ENCODE measurements at regions of chr18 and their contacts with region 1.

Region 1: DNA sequence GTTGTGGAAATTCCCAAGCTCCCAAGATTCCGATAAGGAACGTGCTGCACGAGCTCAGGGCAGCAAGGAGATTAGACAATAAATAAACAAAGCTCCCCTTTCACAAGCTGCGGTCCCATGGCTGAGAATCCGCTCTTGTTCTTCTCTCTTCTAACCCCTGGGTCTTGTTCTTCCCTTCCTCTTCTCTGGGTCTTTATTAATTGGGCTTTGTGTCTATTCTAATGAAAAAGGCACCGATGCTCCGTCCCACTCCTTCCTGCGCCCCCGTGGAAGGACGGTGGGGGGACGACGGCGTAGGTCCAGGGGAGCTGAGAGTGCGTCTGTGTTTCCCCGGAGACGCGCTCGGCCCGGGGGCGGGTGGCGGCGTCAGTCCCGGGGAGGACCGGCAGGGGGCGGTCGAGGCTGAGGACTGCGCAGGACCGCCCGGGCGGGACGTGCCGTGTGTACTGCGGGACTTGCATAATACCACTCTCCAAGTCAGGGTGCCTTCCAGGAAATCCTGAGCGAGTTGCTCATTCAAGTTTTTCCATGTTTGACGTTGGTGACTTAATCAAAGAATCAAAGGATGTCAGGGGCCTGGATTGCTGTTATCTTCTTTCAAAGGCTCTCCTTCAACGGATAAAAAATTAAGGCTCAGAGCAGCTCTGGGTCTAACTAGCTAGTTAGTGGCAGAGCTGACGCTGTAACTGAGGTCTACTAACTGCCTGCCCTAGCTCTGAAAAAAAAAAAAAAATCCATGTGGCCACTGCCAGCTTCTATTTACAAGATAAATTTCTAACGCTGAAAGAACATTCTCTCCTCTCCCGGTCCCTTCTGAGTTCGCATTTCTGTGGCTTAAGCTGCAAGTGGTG is 321.4 kb downstream of the TGIF1 start:
- DNase-seq: peak; percentile 83 to 91 (median 90)
- H3K4me3 ChIP-seq: peak overlapping the region in 6 of 7 experiments; percentile 35 to 74 (median 56)
- H3K27ac ChIP-seq: no peak overlapping the region
- H3K4me1 ChIP-seq: peaks cover 0 to 11% (median 5%) of the 10 kb centered on the region in 4 experiments
- H3K27me3 ChIP-seq: peaks cover 0 to 3% (median 2%) of the 10 kb centered on the region in 5 experiments

Region 2: DNA sequence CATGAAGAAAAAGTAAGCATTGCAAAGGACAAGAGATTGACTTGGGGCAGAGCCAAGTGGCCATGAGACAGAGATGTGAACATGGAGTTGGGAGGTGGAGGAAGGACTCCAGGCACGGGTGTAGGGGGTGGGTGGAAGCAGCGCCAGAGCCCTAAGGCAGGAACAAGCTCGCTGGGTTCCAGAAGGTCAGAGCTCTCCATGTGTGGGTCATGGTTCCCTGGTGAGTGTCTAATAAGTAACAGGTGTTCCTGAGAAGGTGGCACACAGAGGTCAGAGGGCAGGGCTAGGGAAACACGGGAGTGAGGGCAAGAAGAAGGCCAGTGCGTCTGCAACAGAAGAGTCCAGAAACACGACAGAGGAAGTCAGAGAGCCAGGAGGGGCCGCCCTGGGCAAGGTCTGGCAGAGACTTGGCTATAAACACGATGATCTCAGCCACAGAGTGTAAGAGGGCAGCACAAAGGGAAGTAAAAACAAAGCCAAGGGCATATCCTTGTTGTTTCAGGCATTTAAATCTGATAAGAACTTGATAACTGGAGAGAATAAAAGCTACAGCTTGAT is 60.6 kb before region 1 on chr18:
- CTCF ChIA-PET with region 1: interaction called, 16 read pairs
- POLR2A ChIA-PET with region 1: no interaction called
- DNase-seq: peak in 2 of 3 donors; percentile 47 to 60
- H3K4me3 ChIP-seq: no peak overlapping the region
- H3K27ac ChIP-seq: no peak overlapping the region
- H3K4me1 ChIP-seq: peaks cover 9 to 58% (median 29%) of the 10 kb centered on the region in 4 experiments
- H3K27me3 ChIP-seq: no peaks in the 10 kb centered on the region

Region 3: DNA sequence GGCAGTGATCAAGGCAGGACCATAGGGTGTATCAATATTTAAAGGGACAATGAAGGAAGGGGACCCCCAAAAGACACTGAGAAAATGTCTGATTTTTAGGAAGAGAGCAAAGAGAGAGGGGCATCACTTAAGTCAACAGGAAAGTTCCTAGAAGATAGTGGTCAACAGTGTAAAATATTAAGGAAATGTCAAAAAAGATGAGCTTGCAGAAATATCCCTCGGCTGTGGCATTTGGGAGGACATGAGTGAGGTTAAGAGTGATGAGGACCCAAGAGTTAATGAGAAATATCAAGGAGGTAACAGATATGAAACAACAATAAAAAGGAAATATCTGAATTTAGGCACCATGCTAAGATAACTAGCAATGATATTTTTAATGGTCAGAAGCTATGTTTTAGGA is 18.2 kb after region 1 on chr18:
- CTCF ChIA-PET with region 1: interaction called, 26 read pairs
- POLR2A ChIA-PET with region 1: no interaction called
- DNase-seq: no peak
- H3K4me3 ChIP-seq: no peak overlapping the region
- H3K27ac ChIP-seq: no peak overlapping the region
- H3K4me1 ChIP-seq: peaks cover 9 to 30% (median 22%) of the 10 kb centered on the region in 4 experiments
- H3K27me3 ChIP-seq: no peaks in the 10 kb centered on the region

Region 4: GRCh38 chr18:3857544-3857943 is 86.2 kb after region 1 on chr18:
- CTCF ChIA-PET with region 1: interaction called, 11 read pairs
- POLR2A ChIA-PET with region 1: no interaction called
- DNase-seq: no peak
- H3K4me3 ChIP-seq: no peak overlapping the region
- H3K27ac ChIP-seq: no peak overlapping the region
- H3K4me1 ChIP-seq: no peaks in the 10 kb centered on the region
- H3K27me3 ChIP-seq: no peaks in the 10 kb centered on the region

Region 5: DNA sequence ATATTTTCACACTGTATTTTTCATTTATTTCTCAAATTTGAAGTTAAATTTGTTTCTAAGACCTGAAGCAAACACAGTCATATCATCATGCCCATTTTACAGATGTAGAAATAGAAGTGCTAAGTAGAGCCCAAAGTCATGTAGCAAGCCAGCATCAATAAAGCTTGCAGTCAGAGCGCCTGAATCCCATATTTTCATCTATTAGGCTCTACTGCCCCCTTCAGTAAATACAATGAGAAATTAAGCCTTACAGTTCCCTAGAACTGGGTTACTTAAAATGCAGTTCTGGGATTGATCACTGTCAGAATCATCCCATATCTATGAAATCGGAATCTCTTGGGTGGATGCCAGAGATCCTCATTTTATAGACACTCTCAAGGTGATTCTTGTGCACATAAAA is 98.5 kb after region 1 on chr18:
- CTCF ChIA-PET with region 1: interaction called, 70 read pairs
- POLR2A ChIA-PET with region 1: no interaction called
- DNase-seq: peak; percentile 65 to 77 (median 75)
- H3K4me3 ChIP-seq: no peak overlapping the region
- H3K27ac ChIP-seq: no peak overlapping the region
- H3K4me1 ChIP-seq: peaks cover 0 to 4% (median 1%) of the 10 kb centered on the region in 4 experiments
- H3K27me3 ChIP-seq: peaks cover 0 to 2% (median 0%) of the 10 kb centered on the region in 5 experiments

Region 6: GRCh38 chr18:3995476-3996102 is 224.2 kb after region 1 on chr18:
- CTCF ChIA-PET with region 1: interaction called, 35 read pairs
- POLR2A ChIA-PET with region 1: interaction called, 3 read pairs
- DNase-seq: peak; percentile 86 to 95 (median 90)
- H3K4me3 ChIP-seq: no peak overlapping the region
- H3K27ac ChIP-seq: no peak overlapping the region
- H3K4me1 ChIP-seq: peaks cover 0 to 21% (median 4%) of the 10 kb centered on the region in 4 experiments
- H3K27me3 ChIP-seq: no peaks in the 10 kb centered on the region